Activated CD4-positive, alpha-beta memory T cell treated with anti-CD3 and anti-CD28 coated beads for 36 hours (primary cell): ENCODE measurements at regions of chr22 and their contacts with region 1.

Region 1: GRCh38 chr22:40210818-40211217 is 33.1 kb downstream of the TNRC6B start:
- DNase-seq: no peak
- H3K4me3 Mint-ChIP-seq: no peak overlapping the region
- H3K27ac Mint-ChIP-seq: peak overlapping the region; percentile 60
- H3K4me1 Mint-ChIP-seq: peaks cover 69% of the 10 kb centered on the region
- H3K27me3 Mint-ChIP-seq: no peaks in the 10 kb centered on the region

Region 2: DNA sequence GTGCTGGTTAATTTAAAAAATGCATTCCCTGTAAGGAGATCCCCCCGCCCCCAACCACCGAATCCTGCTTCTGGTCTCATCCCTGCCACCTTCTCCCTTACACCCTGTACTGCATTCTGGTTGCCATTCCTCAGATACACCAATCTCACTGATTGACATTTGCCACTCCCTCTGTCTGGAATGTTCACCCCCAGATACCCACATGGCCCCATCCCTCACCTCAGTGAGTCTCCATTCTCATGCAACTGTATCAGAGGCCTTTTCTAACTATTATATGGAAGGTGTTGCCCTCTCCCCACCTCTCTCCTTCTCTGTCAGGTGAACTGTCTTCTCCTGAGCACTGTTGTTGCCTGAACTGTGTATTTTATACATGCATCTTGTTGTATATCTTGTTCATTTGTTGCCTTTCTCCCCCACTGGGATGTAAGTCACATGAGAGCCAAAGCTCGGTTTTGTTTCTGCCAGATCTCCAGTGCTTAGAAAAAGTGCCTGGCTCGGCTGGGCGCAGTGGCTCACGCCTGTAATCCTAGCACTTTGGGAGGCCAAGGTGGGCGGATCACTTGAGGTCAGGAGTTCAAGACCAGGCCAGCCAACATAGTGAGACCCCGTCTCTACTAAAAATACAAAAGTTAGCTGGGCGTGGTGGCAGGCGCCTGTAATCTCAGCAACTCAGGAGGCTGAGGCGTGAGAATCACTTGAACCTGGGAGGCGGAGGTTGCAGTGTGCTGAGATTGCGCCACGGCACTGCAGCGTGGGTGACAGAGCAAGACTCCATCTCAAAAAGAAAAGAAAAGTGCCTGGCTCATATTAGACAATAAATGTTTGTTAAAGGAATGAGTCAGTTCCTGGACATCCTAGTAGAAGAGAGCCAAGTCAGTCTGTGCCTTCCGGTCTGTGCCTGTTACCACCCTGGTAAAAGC is 27.9 kb after region 1 on chr22:
- CTCF ChIA-PET with region 1: no interaction called
- POLR2A ChIA-PET with region 1: no interaction called
- intact Hi-C with region 1: loop called (anchors 2 kb)
- DNase-seq: peak; percentile 59
- H3K4me3 Mint-ChIP-seq: peak overlapping the region; percentile 2
- H3K27ac Mint-ChIP-seq: peak overlapping the region; percentile 59
- H3K4me1 Mint-ChIP-seq: peaks cover 81% of the 10 kb centered on the region
- H3K27me3 Mint-ChIP-seq: no peaks in the 10 kb centered on the region

Region 3: DNA sequence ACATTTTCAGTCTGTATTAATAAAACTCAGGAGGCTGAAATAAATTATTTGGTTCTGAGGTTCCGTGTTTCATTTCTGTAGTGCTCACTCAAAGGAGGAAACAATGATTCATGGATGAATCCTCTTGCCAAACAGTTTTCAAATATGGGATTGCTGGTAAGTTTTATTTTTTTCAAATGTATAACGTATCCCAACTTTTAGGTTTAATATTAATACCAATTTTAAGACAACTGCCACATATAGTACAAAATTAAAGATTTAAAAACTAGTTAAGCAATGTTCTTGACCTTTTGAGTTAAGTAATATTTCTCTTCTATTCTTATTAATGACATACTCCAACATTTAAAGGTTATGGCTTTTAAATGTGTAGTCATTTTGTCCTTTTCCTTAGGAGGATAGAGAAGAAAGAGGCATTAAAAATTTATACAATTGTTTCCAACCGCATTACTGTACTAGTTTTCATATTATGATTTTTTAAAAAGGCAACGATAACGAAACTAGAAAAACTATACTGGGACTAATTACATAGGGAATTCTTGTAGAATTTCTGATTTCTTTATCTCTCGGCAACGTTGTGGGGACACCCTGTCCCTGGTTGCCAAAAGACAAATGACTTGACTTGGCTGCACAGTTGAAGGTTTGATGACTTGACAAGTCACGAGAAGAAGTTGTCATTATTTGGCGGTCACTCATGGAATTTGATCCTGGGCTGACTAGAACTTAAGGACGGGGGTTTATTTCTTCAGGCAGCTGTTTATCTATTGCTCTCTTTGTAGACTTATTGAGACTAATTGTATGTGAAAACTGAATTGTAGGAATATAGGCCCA is 66.4 kb after region 1 on chr22:
- CTCF ChIA-PET with region 1: no interaction called
- POLR2A ChIA-PET with region 1: no interaction called
- intact Hi-C with region 1: loop called (anchors 5 kb)
- DNase-seq: no peak
- H3K4me3 Mint-ChIP-seq: no peak overlapping the region
- H3K27ac Mint-ChIP-seq: peak overlapping the region; percentile 93
- H3K4me1 Mint-ChIP-seq: peaks cover 51% of the 10 kb centered on the region
- H3K27me3 Mint-ChIP-seq: no peaks in the 10 kb centered on the region

Region 4: DNA sequence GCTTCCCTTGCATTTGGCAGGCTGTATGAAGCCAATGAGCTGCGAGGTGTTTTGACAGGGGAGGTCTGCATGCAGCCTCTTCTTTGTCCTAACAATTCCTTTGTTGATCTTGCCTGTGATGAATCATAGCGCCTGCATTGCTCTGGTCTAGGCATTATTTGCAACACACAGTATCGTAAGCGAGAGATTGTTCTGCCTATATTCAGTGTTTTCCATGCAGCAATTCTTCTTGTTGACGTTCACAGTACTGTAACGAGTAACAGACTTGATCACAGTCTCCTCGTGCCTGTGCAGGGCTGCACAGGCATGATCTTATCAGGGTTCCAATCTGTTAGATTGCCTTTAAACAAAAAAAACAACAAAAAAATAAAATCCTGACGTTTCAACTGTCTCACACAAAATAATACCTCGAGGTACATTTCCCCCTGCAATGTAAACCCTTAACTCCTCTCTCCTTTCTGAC is 121.5 kb after region 1 on chr22:
- CTCF ChIA-PET with region 1: no interaction called
- POLR2A ChIA-PET with region 1: no interaction called
- intact Hi-C with region 1: no loop called
- DNase-seq: peak; percentile 44
- H3K4me3 Mint-ChIP-seq: peak overlapping the region; percentile 49
- H3K27ac Mint-ChIP-seq: peak overlapping the region; percentile 80
- H3K4me1 Mint-ChIP-seq: peaks cover 91% of the 10 kb centered on the region
- H3K27me3 Mint-ChIP-seq: no peaks in the 10 kb centered on the region

Region 5: DNA sequence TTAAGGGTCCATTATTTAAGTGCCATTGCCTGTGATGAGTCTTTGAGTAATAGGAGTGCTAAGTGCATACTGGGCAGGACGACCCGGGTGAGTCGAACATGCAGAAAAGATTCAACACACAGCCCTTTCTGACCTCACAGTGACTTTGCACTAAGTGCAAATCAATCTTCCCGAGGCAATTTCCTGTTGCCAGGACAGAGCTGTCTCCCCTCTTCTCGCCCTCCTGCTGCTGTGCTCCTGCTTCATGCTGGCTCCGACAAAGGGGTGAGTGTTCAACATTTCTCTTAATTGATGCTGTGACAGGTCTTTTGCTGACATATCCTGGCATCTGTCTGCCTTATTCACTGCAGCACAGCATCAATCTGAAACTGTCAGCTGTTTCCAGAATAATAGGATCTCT is 510.4 kb after region 1 on chr22:
- CTCF ChIA-PET with region 1: no interaction called
- POLR2A ChIA-PET with region 1: no interaction called
- intact Hi-C with region 1: no loop called
- DNase-seq: no peak
- H3K4me3 Mint-ChIP-seq: no peak overlapping the region
- H3K27ac Mint-ChIP-seq: no peak overlapping the region
- H3K4me1 Mint-ChIP-seq: no peaks in the 10 kb centered on the region
- H3K27me3 Mint-ChIP-seq: no peaks in the 10 kb centered on the region